ENCODE measurements at regions of chr1 and their contacts with region 1.

Region 1: GRCh38 chr1:53278201-53278725 is 39.9 kb upstream of the MAGOH start:
- DNase-seq: peak; percentile 78
- ATAC-seq: peak; percentile 72
- H3K4me3 Mint-ChIP-seq: no peak overlapping the region
- H3K27ac Mint-ChIP-seq: no peak overlapping the region
- H3K4me1 Mint-ChIP-seq: no peaks in the 10 kb centered on the region
- H3K27me3 Mint-ChIP-seq: no peaks in the 10 kb centered on the region

Region 2: GRCh38 chr1:53294567-53294966 is 16.3 kb after region 1 on chr1:
- CTCF ChIA-PET with region 1: interaction called, 29 read pairs
- POLR2A ChIA-PET with region 1: no interaction called
- DNase-seq: peak; percentile 27
- ATAC-seq: no peak
- H3K4me3 Mint-ChIP-seq: no peak overlapping the region
- H3K27ac Mint-ChIP-seq: peak overlapping the region; percentile 78
- H3K4me1 Mint-ChIP-seq: peaks cover 63% of the 10 kb centered on the region
- H3K27me3 Mint-ChIP-seq: no peaks in the 10 kb centered on the region

Region 3: DNA sequence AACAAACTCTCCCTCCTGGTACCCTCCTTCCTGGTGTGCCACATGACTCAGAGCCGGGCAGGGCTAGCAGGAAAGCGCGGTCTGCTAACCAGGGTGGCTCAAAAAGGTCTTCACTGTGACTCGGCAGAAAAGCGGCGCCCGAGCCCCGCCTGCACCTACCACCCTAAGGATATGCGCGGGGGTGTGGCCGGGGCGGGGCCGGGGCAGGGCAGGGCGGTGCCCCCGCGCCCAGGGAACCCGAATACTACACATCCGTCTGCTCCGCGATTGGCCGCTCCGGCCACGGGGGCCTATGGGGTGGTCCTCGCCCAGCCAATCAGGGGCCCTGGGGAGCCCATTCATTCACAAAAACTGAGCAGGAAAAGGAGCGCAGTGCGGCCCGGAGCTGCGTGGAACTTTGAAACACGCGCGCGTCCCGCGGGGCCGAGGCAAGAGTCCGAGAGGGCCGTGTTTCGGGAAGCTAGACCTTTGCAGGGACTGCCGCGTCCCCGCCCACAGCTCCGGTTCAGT is 47.9 kb after region 1 on chr1:
- CTCF ChIA-PET with region 1: interaction called, 11 read pairs
- POLR2A ChIA-PET with region 1: interaction called, 3 read pairs
- DNase-seq: peak; percentile 98
- ATAC-seq: peak; percentile 93
- H3K4me3 Mint-ChIP-seq: peak overlapping the region; percentile 97
- H3K27ac Mint-ChIP-seq: peak overlapping the region; percentile 98
- H3K4me1 Mint-ChIP-seq: peaks cover 54% of the 10 kb centered on the region
- H3K27me3 Mint-ChIP-seq: no peaks in the 10 kb centered on the region

Region 4: DNA sequence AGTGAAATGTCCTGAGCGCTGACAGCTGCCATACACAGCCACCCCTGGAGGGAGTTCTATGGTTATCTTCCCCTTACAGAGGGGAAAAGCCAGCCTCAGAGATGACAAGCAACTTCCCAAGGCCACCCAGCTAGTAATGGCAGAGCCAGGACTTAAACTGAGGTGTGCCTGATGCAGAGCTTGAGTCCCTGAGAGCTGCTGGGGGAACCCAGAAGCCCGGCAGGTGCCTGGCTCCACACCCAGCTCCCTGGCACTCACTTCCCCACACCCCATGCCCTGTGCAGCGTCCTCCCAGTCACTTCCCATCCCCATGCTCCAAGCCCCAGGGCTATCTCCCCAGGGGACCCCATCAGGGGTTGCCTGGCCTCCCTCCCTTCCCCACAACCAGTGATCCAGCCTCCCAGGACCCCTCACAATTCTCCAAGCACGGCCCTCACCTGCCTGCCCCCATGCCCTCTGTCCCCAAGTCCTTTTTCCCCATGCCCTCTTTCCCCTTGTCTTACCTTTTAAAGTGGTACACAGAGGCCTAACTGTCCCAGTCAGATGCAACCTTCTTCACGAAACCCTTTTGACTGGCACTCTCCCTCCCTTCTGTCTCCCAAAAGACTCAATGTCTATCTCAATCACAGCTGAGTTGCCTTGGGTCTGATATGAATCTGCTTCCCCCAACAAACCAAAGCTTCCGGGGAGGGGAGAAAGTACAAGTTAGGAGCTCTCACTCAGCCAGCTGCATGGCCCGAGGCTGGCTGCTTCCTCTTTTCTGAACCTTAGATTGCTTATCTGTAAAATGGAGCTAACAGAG is 89.4 kb after region 1 on chr1:
- CTCF ChIA-PET with region 1: interaction called, 16 read pairs
- POLR2A ChIA-PET with region 1: no interaction called
- DNase-seq: peak; percentile 78
- ATAC-seq: peak; percentile 97
- H3K4me3 Mint-ChIP-seq: peak overlapping the region; percentile 78
- H3K27ac Mint-ChIP-seq: peak overlapping the region; percentile 89
- H3K4me1 Mint-ChIP-seq: peaks cover 28% of the 10 kb centered on the region
- H3K27me3 Mint-ChIP-seq: no peaks in the 10 kb centered on the region

Region 5: DNA sequence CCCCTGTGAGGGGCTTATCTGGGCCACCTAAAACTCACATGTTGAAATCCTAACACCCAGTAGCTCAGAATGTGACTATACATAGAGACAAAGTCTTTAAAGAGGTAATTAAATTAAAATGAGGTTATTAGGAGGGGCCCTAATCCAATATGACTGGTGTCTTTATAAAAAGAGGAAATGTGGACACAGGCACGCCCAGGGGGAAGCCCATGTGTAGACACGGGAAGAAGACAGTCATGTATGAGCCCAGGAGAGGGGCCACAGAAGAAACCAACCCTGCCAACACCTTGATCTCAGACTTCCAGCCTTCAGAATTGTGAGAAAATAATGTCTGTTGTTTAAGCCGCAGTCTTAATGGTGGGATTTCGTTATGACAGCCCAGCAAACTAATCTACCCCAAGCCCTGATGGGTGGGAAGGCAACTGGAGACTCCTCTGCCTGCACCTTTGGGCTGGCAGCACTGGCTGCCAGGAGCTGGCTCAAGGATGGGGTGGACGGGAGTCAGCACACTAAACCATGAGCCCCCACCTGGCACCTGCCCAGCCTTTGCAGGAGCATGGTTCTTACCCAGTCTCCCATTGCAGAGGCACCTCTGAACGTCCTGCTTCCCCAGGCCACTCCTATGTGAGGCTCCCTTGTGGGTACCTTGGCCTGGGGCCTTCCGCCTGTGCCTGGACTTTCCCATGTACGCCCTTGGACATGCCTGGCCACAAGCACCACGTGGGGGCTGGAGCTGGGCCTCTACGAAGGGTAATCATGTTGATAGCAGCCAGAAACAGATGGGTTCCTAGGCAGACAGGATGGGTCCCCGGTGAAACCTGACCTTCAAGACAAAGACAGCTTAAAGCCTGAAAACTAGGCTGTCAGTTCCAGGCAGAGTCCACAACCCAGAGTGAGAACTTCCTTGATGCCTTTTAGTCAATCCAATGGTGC is 123.8 kb after region 1 on chr1:
- CTCF ChIA-PET with region 1: interaction called, 18 read pairs
- POLR2A ChIA-PET with region 1: no interaction called
- DNase-seq: no peak
- ATAC-seq: no peak
- H3K4me3 Mint-ChIP-seq: no peak overlapping the region
- H3K27ac Mint-ChIP-seq: no peak overlapping the region
- H3K4me1 Mint-ChIP-seq: no peaks in the 10 kb centered on the region
- H3K27me3 Mint-ChIP-seq: peaks cover 11% of the 10 kb centered on the region

Region 6: DNA sequence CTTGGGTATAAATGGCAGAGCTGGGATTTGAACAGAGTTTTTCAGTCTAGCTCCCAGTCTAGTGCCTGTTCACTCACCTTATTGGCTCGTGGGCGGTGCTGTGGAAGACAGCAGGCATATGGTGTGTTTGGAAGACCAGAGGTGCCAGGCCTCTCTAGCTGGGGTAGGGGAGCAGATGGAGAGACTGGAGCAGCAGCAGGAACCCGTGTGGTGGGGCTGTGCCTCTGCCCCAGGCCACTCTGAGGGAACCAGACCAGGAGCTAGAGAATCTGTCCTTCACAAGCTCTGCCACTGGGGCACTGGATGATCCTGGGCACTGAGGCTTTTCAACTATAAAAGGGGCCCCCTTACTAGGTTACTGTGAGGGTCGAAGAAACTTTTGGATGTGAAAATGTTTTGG is 186.8 kb after region 1 on chr1:
- CTCF ChIA-PET with region 1: interaction called, 12 read pairs
- POLR2A ChIA-PET with region 1: no interaction called
- DNase-seq: no peak
- ATAC-seq: no peak
- H3K4me3 Mint-ChIP-seq: no peak overlapping the region
- H3K27ac Mint-ChIP-seq: no peak overlapping the region
- H3K4me1 Mint-ChIP-seq: peaks cover 37% of the 10 kb centered on the region
- H3K27me3 Mint-ChIP-seq: no peaks in the 10 kb centered on the region